ENCODE measurements at regions of chr3 and their contacts with region 1.

Region 1: DNA sequence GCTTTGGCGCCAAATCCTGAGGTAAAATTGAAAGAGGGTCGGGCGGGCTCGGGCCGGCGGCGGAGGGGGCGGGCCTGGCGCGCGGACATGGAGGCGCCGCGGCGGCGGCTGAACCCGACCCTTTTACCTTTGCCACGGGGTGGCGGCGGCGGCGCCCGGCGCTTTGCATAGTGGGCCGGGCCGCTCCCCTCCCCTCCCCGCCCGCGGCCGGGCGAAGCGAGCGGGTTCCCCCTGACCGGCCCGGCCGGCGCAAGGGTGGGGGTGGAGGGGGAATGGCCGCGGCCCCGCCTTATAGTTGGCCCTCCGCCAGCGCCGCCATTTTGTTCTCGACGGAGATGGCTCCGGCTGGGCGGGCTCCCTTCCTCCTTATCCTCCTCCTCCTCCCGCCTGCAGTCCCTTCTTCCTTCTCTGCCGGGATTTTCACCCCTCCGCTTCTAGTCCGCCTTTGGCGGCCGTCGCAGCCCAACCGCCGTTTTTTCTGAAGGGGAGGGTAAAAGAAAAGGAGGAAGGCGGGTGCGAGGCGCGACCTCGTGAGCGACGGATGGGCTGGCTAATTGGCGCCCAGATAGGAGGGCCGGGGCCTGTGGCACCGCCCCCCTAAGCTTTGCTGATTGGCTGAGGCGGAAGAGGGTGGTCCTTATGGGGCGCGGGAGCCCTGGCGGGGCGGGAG is 638 bp downstream of the NR2C2 start:
- DNase-seq: peak; percentile 95 to 99 (median 96)
- H3K4me3 ChIP-seq: peak overlapping the region; percentile 63 to 83
- H3K4me3 Mint-ChIP-seq: peak overlapping the region; percentile 98 to 100 (median 100)
- H3K27ac ChIP-seq: peak overlapping the region; percentile 97
- H3K27ac Mint-ChIP-seq: peak overlapping the region; percentile 99 to 100 (median 100)
- H3K4me1 ChIP-seq: peaks cover 44% of the 10 kb centered on the region
- H3K4me1 Mint-ChIP-seq: peaks cover 27 to 71% (median 48%) of the 10 kb centered on the region in 4 donors
- H3K27me3 ChIP-seq: no peaks in the 10 kb centered on the region
- H3K27me3 Mint-ChIP-seq: no peaks in the 10 kb centered on the region

Region 2: DNA sequence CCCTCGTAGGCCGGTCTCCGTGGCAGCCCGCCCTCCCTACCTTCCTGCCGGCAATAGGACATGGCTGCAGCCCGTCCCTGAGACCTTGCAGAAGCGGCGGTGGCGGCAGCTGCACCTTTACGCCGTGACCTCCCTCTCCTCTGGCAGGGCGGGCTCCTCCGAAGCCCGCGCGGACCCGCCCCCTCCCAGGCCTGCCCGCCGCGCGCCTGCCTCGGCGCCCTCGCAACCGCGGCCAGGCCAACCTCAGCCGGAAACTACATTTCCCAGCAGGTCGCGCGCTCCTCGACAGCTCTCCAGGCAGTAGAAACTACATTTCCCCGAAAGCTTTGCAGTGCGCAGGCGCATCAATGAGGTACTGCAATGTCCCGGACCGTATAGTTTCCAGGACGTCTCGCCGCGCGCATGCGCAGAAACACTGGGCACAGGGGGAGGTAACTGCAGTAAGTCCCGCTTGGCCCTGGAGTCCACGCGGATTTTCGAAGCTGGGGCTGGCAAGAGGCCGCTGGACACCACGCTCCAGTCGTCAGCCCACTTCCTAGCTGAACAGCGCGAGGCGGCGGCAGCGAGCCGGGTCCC is 823.3 kb before region 1 on chr3 and contains the starts of genes CHCHD4 and TMEM43:
- CTCF ChIA-PET with region 1: no interaction called
- POLR2A ChIA-PET with region 1: interaction called, 5 read pairs
- intact Hi-C with region 1: loop called (anchors 1 kb)
- DNase-seq: peak; percentile 97 to 99 (median 99)
- H3K4me3 ChIP-seq: peak within 1 kb of the TSS; percentile 53 to 78
- H3K4me3 Mint-ChIP-seq: peak within 1 kb of the TSS; percentile 95 to 98 (median 96)
- H3K27ac ChIP-seq: peak within 1 kb of the TSS; percentile 89
- H3K27ac Mint-ChIP-seq: peak within 1 kb of the TSS; percentile 96 to 97 (median 97)
- H3K4me1 ChIP-seq: peaks cover 38% of the 10 kb centered on the region
- H3K4me1 Mint-ChIP-seq: peaks cover 38 to 64% (median 54%) of the 10 kb centered on the region in 4 donors
- H3K27me3 ChIP-seq: no peaks in the 10 kb centered on the region
- H3K27me3 Mint-ChIP-seq: no peaks in the 10 kb centered on the region
- total RNA-seq, gene CHCHD4: 7.5 to 9.3 TPM
- total RNA-seq, gene TMEM43: 69.3 to 69.7 TPM

Region 3: GRCh38 chr3:14651440-14652251 is 296.4 kb before region 1 on chr3 and contains the start of gene CCDC174:
- CTCF ChIA-PET with region 1: no interaction called
- POLR2A ChIA-PET with region 1: interaction called, 20 read pairs
- intact Hi-C with region 1: loop called (anchors 1 kb)
- DNase-seq: peak; percentile 95 to 98 (median 97)
- H3K4me3 ChIP-seq: peak within 1 kb of the TSS; percentile 67 to 98
- H3K4me3 Mint-ChIP-seq: peak within 1 kb of the TSS; percentile 84 to 99 (median 94)
- H3K27ac ChIP-seq: peak within 1 kb of the TSS; percentile 98
- H3K27ac Mint-ChIP-seq: peak within 1 kb of the TSS; percentile 91 to 100 (median 98)
- H3K4me1 ChIP-seq: peaks cover 37% of the 10 kb centered on the region
- H3K4me1 Mint-ChIP-seq: peaks cover 27 to 50% (median 40%) of the 10 kb centered on the region in 4 donors
- H3K27me3 ChIP-seq: no peaks in the 10 kb centered on the region
- H3K27me3 Mint-ChIP-seq: no peaks in the 10 kb centered on the region
- total RNA-seq, gene CCDC174: 45.9 to 51.8 TPM

Region 4: DNA sequence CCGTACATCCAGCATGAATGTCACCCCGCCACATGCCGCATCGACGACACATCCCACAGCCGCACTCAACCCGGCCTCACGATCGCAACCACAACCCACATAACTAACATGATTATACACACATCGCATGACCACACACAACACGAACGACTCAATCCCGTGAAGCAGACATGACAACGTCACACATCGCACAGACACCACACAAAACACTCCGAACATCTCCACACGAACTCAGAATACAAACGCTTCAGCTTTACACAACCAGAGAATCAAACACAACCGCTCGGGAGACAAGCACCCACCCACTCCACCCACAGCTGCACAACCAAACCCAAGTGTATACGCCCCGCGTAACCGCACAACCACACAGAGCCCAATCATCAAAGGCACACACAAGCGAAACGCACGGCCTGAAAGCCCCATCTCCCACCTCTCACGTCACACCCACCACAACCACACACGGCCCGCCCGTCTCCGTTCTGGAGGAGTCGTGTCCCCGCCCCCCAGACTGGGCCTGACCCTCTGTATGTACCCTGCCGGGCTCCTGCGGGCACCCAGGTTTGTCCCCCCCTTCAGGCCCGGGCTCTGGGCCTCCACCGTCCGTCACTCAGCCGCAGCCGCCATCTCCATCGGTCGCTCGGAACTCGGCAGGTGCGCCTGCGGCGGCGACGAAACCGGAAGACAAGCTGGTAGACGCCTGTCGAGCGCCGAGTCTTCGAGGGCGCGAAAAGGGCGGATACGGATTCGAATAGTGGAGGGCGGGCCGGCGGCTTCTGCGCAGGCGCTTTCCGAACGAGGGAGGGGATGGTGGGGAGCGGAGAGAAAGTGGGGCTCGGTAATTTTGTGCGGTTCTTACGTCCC is 150.7 kb after region 1 on chr3 and contains the start of gene RBSN:
- CTCF ChIA-PET with region 1: interaction called, 4 read pairs
- POLR2A ChIA-PET with region 1: interaction called, 13 read pairs
- intact Hi-C with region 1: loop called (anchors 1 kb)
- DNase-seq: peak; percentile 96 to 98 (median 96)
- H3K4me3 ChIP-seq: peak within 1 kb of the TSS; percentile 61 to 73
- H3K4me3 Mint-ChIP-seq: peak within 1 kb of the TSS; percentile 88 to 99 (median 96)
- H3K27ac ChIP-seq: peak within 1 kb of the TSS; percentile 95
- H3K27ac Mint-ChIP-seq: peak within 1 kb of the TSS; percentile 89 to 99 (median 99)
- H3K4me1 ChIP-seq: peaks cover 22% of the 10 kb centered on the region
- H3K4me1 Mint-ChIP-seq: peaks cover 19 to 35% (median 27%) of the 10 kb centered on the region in 4 donors
- H3K27me3 ChIP-seq: no peaks in the 10 kb centered on the region
- H3K27me3 Mint-ChIP-seq: peaks cover 1 to 2% of the 10 kb centered on the region in 2 donors
- total RNA-seq, gene RBSN: 33.2 to 34.7 TPM

Measured in CD4-positive, alpha-beta memory T cell (primary cell).